ENCODE measurements at regions of chr7 and their contacts with region 1.

Region 1: GRCh38 chr7:157336383-157337315 is at the start of gene DNAJB6:
- DNase-seq: peak; percentile 97
- ATAC-seq: peak; percentile 82
- H3K4me3 Mint-ChIP-seq: peak within 1 kb of the TSS; percentile 95
- H3K27ac Mint-ChIP-seq: peak within 1 kb of the TSS; percentile 97
- H3K4me1 Mint-ChIP-seq: peaks cover 63% of the 10 kb centered on the region
- H3K27me3 Mint-ChIP-seq: no peaks in the 10 kb centered on the region
- CTCF ChIP-seq: no peak
- total RNA-seq, gene DNAJB6: 74.3 and 75.6 TPM in 2 replicates

Region 2: GRCh38 chr7:156640257-156640948 is 696.2 kb before region 1 on chr7 and contains the start of gene RNF32:
- CTCF ChIA-PET with region 1: no interaction called
- POLR2A ChIA-PET with region 1: no interaction called
- intact Hi-C with region 1: loop called (anchors 1 kb)
- DNase-seq: peak; percentile 98
- ATAC-seq: peak; percentile 84
- H3K4me3 Mint-ChIP-seq: peak within 1 kb of the TSS; percentile 92
- H3K27ac Mint-ChIP-seq: peak within 1 kb of the TSS; percentile 96
- H3K4me1 Mint-ChIP-seq: peaks cover 29% of the 10 kb centered on the region
- H3K27me3 Mint-ChIP-seq: no peaks in the 10 kb centered on the region
- CTCF ChIP-seq: no peak
- total RNA-seq, gene RNF32: 1.0 and 2.9 TPM in 2 replicates

Region 3: GRCh38 chr7:156949541-156950380 is 386.9 kb before region 1 on chr7 and contains the start of gene NOM1:
- CTCF ChIA-PET with region 1: no interaction called
- POLR2A ChIA-PET with region 1: interaction called, 3 read pairs
- intact Hi-C with region 1: loop called (anchors 2 kb)
- DNase-seq: peak; percentile 95
- ATAC-seq: peak; percentile 94
- H3K4me3 Mint-ChIP-seq: peak within 1 kb of the TSS; percentile 93
- H3K27ac Mint-ChIP-seq: peak within 1 kb of the TSS; percentile 78
- H3K4me1 Mint-ChIP-seq: peaks cover 24% of the 10 kb centered on the region
- H3K27me3 Mint-ChIP-seq: peaks cover 8% of the 10 kb centered on the region
- CTCF ChIP-seq: no peak
- total RNA-seq, gene NOM1: 34.7 and 39.1 TPM in 2 replicates

Region 4: GRCh38 chr7:157138424-157139110 is 198.1 kb before region 1 on chr7 and contains the start of gene UBE3C:
- CTCF ChIA-PET with region 1: no interaction called
- POLR2A ChIA-PET with region 1: no interaction called
- intact Hi-C with region 1: loop called (anchors 2 kb)
- DNase-seq: peak; percentile 91
- ATAC-seq: peak; percentile 89
- H3K4me3 Mint-ChIP-seq: peak within 1 kb of the TSS; percentile 81
- H3K27ac Mint-ChIP-seq: peak within 1 kb of the TSS; percentile 88
- H3K4me1 Mint-ChIP-seq: peaks cover 37% of the 10 kb centered on the region
- H3K27me3 Mint-ChIP-seq: no peaks in the 10 kb centered on the region
- CTCF ChIP-seq: no peak
- total RNA-seq, gene UBE3C: 52.8 and 65.3 TPM in 2 replicates

Region 5: GRCh38 chr7:157299613-157300368 is 36.9 kb before region 1 on chr7:
- CTCF ChIA-PET with region 1: no interaction called
- POLR2A ChIA-PET with region 1: interaction called, 13 read pairs
- intact Hi-C with region 1: loop called (anchors 1 kb)
- DNase-seq: no peak
- ATAC-seq: no peak
- H3K4me3 Mint-ChIP-seq: no peak overlapping the region
- H3K27ac Mint-ChIP-seq: no peak overlapping the region
- H3K4me1 Mint-ChIP-seq: peaks cover 19% of the 10 kb centered on the region
- H3K27me3 Mint-ChIP-seq: peaks cover 2% of the 10 kb centered on the region
- CTCF ChIP-seq: no peak

Region 6: GRCh38 chr7:157318012-157318709 is 18.5 kb before region 1 on chr7:
- CTCF ChIA-PET with region 1: no interaction called
- POLR2A ChIA-PET with region 1: no interaction called
- intact Hi-C with region 1: no loop called
- DNase-seq: no peak
- ATAC-seq: no peak
- H3K4me3 Mint-ChIP-seq: no peak overlapping the region
- H3K27ac Mint-ChIP-seq: no peak overlapping the region
- H3K4me1 Mint-ChIP-seq: peaks cover 3% of the 10 kb centered on the region
- H3K27me3 Mint-ChIP-seq: no peaks in the 10 kb centered on the region
- CTCF ChIP-seq: no peak

Region 7: GRCh38 chr7:158856883-158857668 is 1520.4 kb after region 1 on chr7:
- CTCF ChIA-PET with region 1: no interaction called
- POLR2A ChIA-PET with region 1: interaction called, 4 read pairs
- intact Hi-C with region 1: loop called (anchors 5 kb)
- DNase-seq: no peak
- ATAC-seq: peak; percentile 9
- H3K4me3 Mint-ChIP-seq: peak overlapping the region; percentile 98
- H3K27ac Mint-ChIP-seq: no peak overlapping the region
- H3K4me1 Mint-ChIP-seq: peaks cover 12% of the 10 kb centered on the region
- H3K27me3 Mint-ChIP-seq: no peaks in the 10 kb centered on the region
- CTCF ChIP-seq: no peak